ENCODE measurements at regions of chr2 and their contacts with region 1.

Region 1: DNA sequence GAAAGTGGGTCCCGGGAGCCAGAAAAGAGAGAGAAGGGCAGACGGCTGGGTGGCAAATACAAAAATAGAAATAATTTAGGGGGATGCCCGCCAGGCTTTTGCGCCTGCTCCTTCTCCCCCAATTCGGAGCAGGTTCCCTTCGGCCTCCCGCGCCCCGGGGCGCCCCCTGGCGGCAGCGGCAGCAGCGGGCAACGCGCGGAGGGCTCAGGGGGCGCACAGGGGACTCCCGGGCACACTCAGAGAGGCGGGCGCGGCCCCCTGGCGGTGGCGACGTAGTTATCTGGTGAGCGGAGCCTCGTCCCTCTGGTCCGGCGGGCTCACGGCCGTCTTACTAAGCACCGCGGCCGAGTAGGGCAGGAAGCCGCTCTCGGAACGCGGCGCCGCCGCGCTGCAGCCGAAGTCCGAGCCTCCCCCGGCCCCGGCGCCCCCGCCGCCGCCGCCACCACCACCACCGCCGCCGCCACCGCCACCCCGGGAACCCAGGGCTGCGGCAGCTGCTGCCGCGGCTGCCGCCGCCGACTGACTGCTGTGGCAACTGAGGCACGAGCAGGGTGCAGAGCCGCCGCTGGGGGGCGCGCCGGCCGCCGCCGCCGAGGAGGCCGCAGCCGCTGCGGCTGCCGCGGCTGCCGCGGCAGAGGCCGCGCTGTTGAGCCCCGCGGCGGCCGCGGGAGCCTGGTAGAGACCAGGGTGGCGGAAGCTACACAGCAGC is 3.8 kb downstream of the EVX2 start:
- DNase-seq: peak in 1 of 2 donors; percentile 40
- ATAC-seq: peak in 2 of 3 donors; percentile 34 to 53
- H3K4me3 ChIP-seq: no peak overlapping the region
- H3K4me3 Mint-ChIP-seq: peak overlapping the region; percentile 75
- H3K27ac ChIP-seq: no peak overlapping the region
- H3K27ac Mint-ChIP-seq: peak overlapping the region; percentile 70 to 77
- H3K4me1 ChIP-seq: peaks cover 17% of the 10 kb centered on the region
- H3K4me1 Mint-ChIP-seq: peaks cover 9 to 23% of the 10 kb centered on the region in 2 donors
- H3K27me3 ChIP-seq: peaks cover 89% of the 10 kb centered on the region
- H3K27me3 Mint-ChIP-seq: peaks cover 66 to 72% of the 10 kb centered on the region in 2 donors
- CTCF ChIP-seq: peak; percentile 33

Region 2: DNA sequence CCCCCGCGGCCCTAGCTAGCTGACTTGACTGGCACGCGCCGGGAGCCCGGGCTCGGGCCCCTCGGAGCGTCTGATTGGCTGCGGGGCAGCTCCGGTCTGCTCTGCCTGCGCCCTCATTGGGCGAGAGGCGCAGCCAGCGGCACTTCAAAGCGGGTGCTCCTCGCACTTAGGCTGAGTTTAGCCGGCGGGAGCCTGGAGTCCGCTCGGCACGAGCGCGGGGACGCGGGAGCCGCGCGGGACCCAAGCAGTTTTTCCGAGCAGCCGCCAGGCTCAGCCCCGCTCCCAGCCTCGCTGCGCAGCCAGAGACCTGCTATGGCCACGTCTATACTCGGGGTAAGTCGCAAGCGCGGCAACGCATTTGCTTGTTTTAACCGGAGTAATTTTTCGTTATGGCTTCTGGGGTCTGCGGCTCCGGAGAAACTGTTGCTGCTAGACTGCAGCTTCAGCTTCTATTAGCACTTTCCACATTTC is 1745.2 kb before region 1 on chr2 and contains the start of gene SP9:
- intact Hi-C with region 1: loop called (anchors 5 kb)
- DNase-seq: peak in 1 of 2 donors; percentile 54
- ATAC-seq: peak in 2 of 3 donors; percentile 22 to 34
- H3K4me3 ChIP-seq: no peak within 1 kb of the TSS
- H3K4me3 Mint-ChIP-seq: peak within 1 kb of the TSS; percentile 76
- H3K27ac ChIP-seq: no peak within 1 kb of the TSS
- H3K27ac Mint-ChIP-seq: peak within 1 kb of the TSS in 1 of 2 donors; percentile 59
- H3K4me1 ChIP-seq: peaks cover 56% of the 10 kb centered on the region
- H3K4me1 Mint-ChIP-seq: peaks cover 38 to 50% of the 10 kb centered on the region in 2 donors
- H3K27me3 ChIP-seq: peaks cover 88% of the 10 kb centered on the region
- H3K27me3 Mint-ChIP-seq: peaks cover 77 to 79% of the 10 kb centered on the region in 2 donors
- CTCF ChIP-seq: no peak
- total RNA-seq, gene SP9: not detected

Region 3: GRCh38 chr2:176110975-176111663 is 31.1 kb after region 1 on chr2:
- intact Hi-C with region 1: loop called (anchors 5 kb)
- DNase-seq: peak in 1 of 2 donors; percentile 39
- ATAC-seq: no peak
- H3K4me3 ChIP-seq: no peak overlapping the region
- H3K4me3 Mint-ChIP-seq: peak overlapping the region; percentile 9
- H3K27ac ChIP-seq: no peak overlapping the region
- H3K27ac Mint-ChIP-seq: no peak overlapping the region
- H3K4me1 ChIP-seq: peaks cover 3% of the 10 kb centered on the region
- H3K4me1 Mint-ChIP-seq: peaks cover 0 to 9% of the 10 kb centered on the region in 2 donors
- H3K27me3 ChIP-seq: peaks cover 76% of the 10 kb centered on the region
- H3K27me3 Mint-ChIP-seq: peaks cover 65 to 68% of the 10 kb centered on the region in 2 donors
- CTCF ChIP-seq: no peak